Dorsolateral prefrontal cortex (tissue), 120 donors: ENCODE measurements at regions of chr4 and their contacts with region 1.

Region 1: GRCh38 chr4:5050520-5051277 is 581 bp upstream of the STK32B start:
- DNase-seq: peak; percentile 35 to 85 (median 76)
- H3K4me3 ChIP-seq: peak overlapping the region; percentile 31 to 78 (median 64)
- H3K27ac ChIP-seq: peak overlapping the region in 8 of 59 donors; percentile 8 to 52 (median 34)
- H3K27me3 ChIP-seq: peaks cover 0 to 8% (median 0%) of the 10 kb centered on the region in 45 donors
- CTCF ChIP-seq: peak; percentile 22 to 90 (median 76)

Region 2: GRCh38 chr4:5084911-5085475 is 34.3 kb after region 1 on chr4:
- intact Hi-C with region 1: no loop called
- DNase-seq: no peak
- H3K4me3 ChIP-seq: no peak overlapping the region
- H3K27ac ChIP-seq: no peak overlapping the region
- H3K27me3 ChIP-seq: peaks cover 0 to 2% (median 0%) of the 10 kb centered on the region in 45 donors
- CTCF ChIP-seq: no peak

Region 3: DNA sequence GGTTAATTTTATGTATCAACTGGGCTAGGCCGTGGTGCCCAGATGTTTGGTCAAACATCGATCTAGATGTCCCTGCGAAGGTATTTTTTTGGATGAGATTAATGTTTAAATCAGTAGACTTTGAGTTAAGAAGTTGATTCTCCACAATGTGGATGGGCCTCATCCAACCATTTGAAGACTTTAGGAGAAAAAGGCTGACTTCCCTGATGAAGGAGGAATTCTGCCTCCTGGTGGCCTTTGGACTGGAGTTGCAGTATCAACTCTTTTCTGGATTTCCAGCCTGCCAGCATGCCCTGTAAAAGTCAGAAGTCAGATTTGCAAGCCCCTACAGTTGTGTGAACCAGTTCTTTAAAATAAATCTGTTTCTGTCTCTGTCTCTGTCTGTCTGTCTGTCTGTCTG is 92.0 kb after region 1 on chr4:
- intact Hi-C with region 1: loop called in 1 of 2 experiments (anchors 5 kb)
- DNase-seq: no peak
- H3K4me3 ChIP-seq: no peak overlapping the region
- H3K27ac ChIP-seq: no peak overlapping the region
- H3K27me3 ChIP-seq: peaks cover 0 to 2% (median 0%) of the 10 kb centered on the region in 45 donors
- CTCF ChIP-seq: peak in 47 of 56 donors; percentile 11 to 66 (median 38)

Region 4: DNA sequence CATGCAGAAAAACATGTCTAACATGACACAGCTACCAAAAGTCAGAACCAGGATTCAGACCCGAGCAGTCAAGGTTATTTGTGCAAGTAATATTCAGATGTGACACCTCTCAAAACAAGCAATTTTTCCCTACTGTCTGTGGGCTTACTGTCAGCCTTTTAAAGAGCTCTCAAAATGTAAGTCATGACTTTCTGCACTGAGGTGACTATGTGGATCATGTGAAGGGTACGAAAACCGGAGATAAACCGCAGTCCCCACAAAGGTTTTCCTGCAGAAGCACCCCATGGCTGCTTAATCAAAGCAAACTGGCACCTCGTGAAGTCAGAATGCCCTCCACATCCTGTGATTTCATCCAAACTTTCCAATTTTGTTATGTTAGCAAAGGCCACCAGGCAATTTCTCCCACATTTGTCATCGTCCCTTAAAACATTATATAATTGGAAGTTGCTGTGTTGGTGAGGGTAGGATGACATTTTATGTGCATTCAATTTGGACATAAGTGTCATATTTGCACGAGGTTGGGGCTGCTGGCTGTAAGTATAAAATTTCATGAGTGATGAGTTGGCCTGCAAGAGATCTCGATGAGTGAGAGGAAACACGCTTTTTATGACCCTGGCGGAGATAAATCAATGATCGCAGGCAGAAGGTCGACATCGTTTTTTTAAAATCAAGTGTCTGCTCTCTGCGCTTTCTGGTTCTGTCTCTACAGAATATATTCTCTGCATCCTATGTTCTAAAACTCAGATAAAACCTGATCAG is 161.7 kb after region 1 on chr4:
- intact Hi-C with region 1: no loop called
- DNase-seq: no peak
- H3K4me3 ChIP-seq: no peak overlapping the region
- H3K27ac ChIP-seq: no peak overlapping the region
- H3K27me3 ChIP-seq: no peaks in the 10 kb centered on the region
- CTCF ChIP-seq: no peak

Region 5: GRCh38 chr4:5460116-5460801 is 409.6 kb after region 1 on chr4:
- intact Hi-C with region 1: loop called (anchors 5 to 10 kb)
- DNase-seq: peak in 3 of 10 donors; percentile 10 to 37 (median 21)
- H3K4me3 ChIP-seq: no peak overlapping the region
- H3K27ac ChIP-seq: no peak overlapping the region
- H3K27me3 ChIP-seq: peaks cover 0 to 1% (median 0%) of the 10 kb centered on the region in 45 donors
- CTCF ChIP-seq: peak in 53 of 56 donors; percentile 24 to 68 (median 47)

Region 6: GRCh38 chr4:5791654-5792053 is 741.0 kb after region 1 on chr4:
- intact Hi-C with region 1: loop called (anchors 5 kb)
- DNase-seq: peak in 2 of 10 donors; percentile 7 to 11
- H3K4me3 ChIP-seq: no peak overlapping the region
- H3K27ac ChIP-seq: no peak overlapping the region
- H3K27me3 ChIP-seq: no peaks in the 10 kb centered on the region
- CTCF ChIP-seq: no peak

Region 7: GRCh38 chr4:5812506-5813229 is 762.0 kb after region 1 on chr4:
- intact Hi-C with region 1: loop called (anchors 2 to 5 kb)
- DNase-seq: peak in 2 of 10 donors; percentile 23 to 27
- H3K4me3 ChIP-seq: no peak overlapping the region
- H3K27ac ChIP-seq: no peak overlapping the region
- H3K27me3 ChIP-seq: no peaks in the 10 kb centered on the region
- CTCF ChIP-seq: peak; percentile 52 to 84 (median 77)